ENCODE measurements at regions of chr15 and their contacts with region 1.

Region 1: GRCh38 chr15:59725172-59725486 is 36.0 kb upstream of the BNIP2 start:
- DNase-seq: no peak
- H3K4me3 Mint-ChIP-seq: no peak overlapping the region
- H3K27ac Mint-ChIP-seq: no peak overlapping the region
- H3K4me1 Mint-ChIP-seq: no peaks in the 10 kb centered on the region
- H3K27me3 Mint-ChIP-seq: peaks cover 4% of the 10 kb centered on the region

Region 2: GRCh38 chr15:59688841-59689625 is 36.1 kb before region 1 on chr15 and contains the start of gene BNIP2:
- CTCF ChIA-PET with region 1: interaction called, 14 read pairs
- DNase-seq: peak; percentile 100
- H3K4me3 Mint-ChIP-seq: peak within 1 kb of the TSS; percentile 85
- H3K27ac Mint-ChIP-seq: peak within 1 kb of the TSS; percentile 99
- H3K4me1 Mint-ChIP-seq: peaks cover 52% of the 10 kb centered on the region
- H3K27me3 Mint-ChIP-seq: no peaks in the 10 kb centered on the region

Region 3: DNA sequence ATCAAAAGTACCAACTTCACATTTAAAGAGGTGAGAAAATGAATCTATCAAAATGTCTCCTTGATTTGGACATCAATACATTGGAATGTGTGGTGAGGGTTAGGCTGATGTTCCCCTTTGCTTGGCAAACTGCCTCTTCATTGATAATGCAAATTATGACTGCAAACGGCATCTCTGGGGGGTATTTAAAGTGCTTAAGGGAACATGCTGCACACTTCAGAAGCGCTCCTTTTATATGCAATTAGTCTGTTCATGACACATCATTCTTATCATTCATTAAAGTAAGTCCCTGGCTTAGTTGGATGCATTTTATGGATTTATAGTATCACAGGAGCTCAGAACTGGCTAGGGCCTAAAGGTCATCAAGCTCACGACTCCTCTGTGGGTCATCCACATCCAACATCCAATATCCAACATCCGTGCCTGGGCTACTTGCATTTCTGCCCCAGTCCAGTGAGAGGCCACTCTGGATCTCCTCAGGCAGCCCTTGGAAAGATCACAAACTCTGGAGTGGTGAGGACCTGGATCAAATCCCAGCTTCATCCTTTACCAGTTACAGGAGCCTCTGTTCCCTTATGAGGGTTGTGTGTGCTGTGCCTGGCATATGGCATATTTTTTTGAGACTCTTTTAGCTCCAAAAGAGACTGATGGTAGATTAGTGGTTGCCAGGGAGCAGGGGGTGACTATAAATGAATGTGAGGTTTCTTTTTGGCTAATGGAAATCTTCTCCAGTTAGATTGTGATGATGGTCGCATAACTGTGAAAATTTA is 142.1 kb after region 1 on chr15:
- CTCF ChIA-PET with region 1: no interaction called
- DNase-seq: no peak
- H3K4me3 Mint-ChIP-seq: no peak overlapping the region
- H3K27ac Mint-ChIP-seq: no peak overlapping the region
- H3K4me1 Mint-ChIP-seq: no peaks in the 10 kb centered on the region
- H3K27me3 Mint-ChIP-seq: peaks cover 28% of the 10 kb centered on the region

Measured in activated naive CD4-positive, alpha-beta T cell treated with anti-CD3 and anti-CD28 coated beads, Interleukin-2, amount 10 ng/mL, durations not matched to agents 7 days and 5 days (primary cell).